ENCODE measurements at regions of chr1 and their contacts with region 1.

Region 1: DNA sequence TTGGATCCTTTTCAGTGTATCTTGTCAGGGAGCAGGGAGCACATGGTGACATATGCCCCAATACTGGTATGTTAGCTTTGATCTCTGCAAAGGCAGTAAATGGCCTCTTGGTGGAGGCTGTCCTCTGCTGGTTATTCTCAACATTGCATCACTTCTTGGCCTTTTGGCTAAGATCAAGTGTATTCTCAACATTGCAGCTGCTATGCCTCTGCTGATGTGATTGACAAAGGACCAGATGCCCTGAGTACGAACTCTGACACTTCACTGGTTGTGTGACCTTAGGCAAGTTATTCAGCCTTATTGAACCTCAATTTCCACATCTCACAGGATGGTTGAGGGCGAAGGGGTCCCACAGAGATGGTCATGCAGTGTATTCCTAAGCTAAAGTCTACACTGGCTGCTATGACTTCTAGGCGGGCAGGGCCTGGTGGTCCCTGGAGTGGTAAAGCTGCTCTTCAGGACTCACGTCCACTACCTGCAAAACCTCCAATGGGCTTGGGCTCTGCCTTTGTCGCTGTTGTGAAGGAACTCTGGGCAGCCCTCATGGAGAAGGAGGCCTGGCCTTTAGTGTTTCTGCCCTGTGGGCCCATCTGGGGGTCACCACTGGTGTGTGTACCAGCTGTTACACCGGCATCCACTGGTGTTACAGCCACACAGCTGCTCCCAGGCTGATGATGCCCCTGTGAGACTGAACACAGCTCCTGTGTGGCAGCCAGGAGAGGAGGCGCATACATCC is 64.8 kb downstream of the DNTTIP2 start:
- DNase-seq: peak; percentile 87
- ATAC-seq: peak; percentile 88
- H3K4me3 ChIP-seq: no peak overlapping the region
- H3K27ac ChIP-seq: peak overlapping the region; percentile 69; the same call in 1 of the 2 replicates
- H3K4me1 ChIP-seq: peaks cover 7% of the 10 kb centered on the region
- H3K27me3 ChIP-seq: no peaks in the 10 kb centered on the region
- CTCF ChIP-seq: peak; percentile 98

Region 2: DNA sequence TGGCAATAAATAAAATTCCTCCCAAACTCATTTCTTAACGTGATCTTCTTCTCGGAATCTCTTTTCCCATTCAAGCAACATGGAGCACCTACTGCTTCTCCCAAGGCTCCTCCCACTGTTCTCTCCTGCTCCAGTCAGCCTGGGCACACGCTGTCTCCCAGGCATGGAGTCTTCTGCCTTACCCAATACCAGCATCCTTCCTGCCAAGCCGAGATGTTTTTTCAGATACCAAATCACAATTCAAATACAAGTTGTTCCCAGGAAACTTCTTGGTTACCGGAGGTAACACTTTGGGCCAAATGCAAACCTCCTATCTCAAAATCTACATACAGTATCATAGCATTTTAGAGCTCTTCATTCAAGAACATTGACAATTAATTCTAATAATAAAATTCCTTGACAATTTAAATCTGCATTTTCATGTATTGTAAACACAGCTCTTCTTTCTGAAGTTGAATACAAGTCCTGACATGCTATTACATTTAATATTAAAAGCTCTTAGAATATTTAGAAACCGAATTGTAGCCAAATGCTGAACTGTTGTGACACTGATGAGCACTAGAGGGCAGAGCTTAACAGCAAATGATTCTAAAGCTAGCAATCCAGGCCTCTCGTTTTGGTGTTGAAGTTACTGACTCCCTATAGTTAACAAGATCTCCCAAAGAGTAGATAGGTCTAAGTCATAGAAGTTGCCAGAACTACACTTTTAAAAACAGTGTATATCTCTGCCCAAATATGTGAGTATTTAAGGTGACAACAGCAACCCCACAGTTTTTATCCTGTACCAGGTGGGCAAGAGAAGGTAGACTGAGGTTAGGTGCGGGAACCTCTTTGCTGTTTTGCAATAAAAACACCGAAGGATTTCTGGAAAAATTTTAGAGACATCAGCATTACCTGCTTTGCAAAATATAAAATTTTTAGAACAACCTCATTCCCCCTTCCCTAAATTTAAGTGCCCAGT is 184.8 kb before region 1 on chr1:
- CTCF ChIA-PET with region 1: interaction called, 38 read pairs
- POLR2A ChIA-PET with region 1: interaction called, 3 read pairs
- in situ Hi-C with region 1: no loop called
- intact Hi-C with region 1: loop called (anchors 1 kb)
- DNase-seq: peak; percentile 60
- ATAC-seq: peak; percentile 83
- H3K4me3 ChIP-seq: no peak overlapping the region
- H3K27ac ChIP-seq: peak overlapping the region; percentile 65
- H3K4me1 ChIP-seq: peaks cover 43% of the 10 kb centered on the region
- H3K27me3 ChIP-seq: no peaks in the 10 kb centered on the region
- CTCF ChIP-seq: peak; percentile 67; the same call in 1 of the 2 replicates

Region 3: DNA sequence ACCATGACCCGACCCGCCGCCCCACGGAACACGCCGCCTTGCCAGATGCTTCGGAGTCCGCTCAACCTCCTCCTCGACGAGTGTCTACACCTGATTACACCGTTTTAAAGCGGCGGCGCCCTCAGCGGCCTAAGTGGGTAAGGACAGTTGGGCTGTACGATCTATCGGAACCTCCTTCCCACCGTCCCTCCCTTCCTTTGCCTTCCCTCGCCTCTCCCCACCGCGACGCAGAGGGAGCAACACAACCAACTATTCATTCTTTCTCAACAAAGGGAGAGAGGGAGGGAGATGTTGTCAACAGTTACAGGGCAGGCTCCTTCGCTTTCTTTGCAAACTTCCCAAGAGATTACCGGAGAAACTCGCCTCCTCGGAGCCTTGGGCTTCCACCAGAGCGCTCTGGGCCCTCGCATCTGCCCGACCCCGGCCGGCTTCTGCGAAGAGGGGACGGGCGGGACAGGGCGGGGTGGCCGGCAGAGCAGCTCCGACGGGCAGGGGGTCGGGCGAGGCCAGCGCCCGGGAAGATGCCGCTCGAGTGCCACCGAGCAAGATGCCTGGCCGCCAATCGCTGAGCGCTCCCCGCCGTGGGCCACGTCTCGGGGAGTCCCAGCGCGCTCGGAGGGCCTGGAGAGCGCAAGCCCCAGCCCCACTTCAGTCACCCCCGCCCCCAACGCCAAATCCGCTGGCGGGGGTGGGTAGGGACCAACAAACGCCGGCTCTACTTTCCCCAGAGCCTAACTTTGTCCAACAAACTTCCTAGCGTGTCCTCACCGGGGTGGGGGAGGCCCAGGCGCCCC is 133.3 kb before region 1 on chr1:
- CTCF ChIA-PET with region 1: interaction called, 3 read pairs
- POLR2A ChIA-PET with region 1: no interaction called
- in situ Hi-C with region 1: no loop called
- intact Hi-C with region 1: loop called (anchors 5 kb)
- DNase-seq: no peak
- ATAC-seq: peak; percentile 90
- H3K4me3 ChIP-seq: peak overlapping the region; percentile 68 to 72
- H3K27ac ChIP-seq: peak overlapping the region; percentile 89
- H3K4me1 ChIP-seq: peaks cover 28% of the 10 kb centered on the region
- H3K27me3 ChIP-seq: no peaks in the 10 kb centered on the region
- CTCF ChIP-seq: peak; percentile 73

Region 4: DNA sequence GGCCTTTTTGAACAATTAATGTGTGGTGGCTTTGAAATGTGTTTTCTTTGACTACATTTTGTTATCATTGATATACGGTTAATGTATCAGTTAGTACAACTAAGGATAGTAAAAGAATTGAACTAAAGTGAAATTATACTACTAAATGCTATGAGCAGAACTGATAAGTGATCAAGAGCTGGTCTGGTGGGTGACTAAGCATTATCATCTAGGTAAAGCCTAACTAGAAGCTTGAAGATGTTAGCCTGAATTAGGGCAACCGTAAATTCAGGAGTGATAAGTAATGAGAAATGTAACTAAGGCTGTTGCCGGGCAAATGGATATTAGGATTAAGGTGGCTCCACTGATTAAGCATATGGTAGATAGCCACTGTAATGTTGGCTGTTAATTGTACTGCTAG is 111.0 kb after region 1 on chr1:
- CTCF ChIA-PET with region 1: no interaction called
- POLR2A ChIA-PET with region 1: no interaction called
- in situ Hi-C with region 1: no loop called
- intact Hi-C with region 1: no loop called
- DNase-seq: no peak
- ATAC-seq: no peak
- H3K4me3 ChIP-seq: no peak overlapping the region
- H3K27ac ChIP-seq: no peak overlapping the region
- H3K4me1 ChIP-seq: no peaks in the 10 kb centered on the region
- H3K27me3 ChIP-seq: no peaks in the 10 kb centered on the region
- CTCF ChIP-seq: no peak